ENCODE measurements at regions of chr13 and their contacts with region 1.

Region 1: GRCh38 chr13:46492946-46493345 is 60.0 kb upstream of the LRCH1 start:
- DNase-seq: peak in 1 of 10 donors; percentile 28
- H3K4me3 ChIP-seq: no peak overlapping the region
- H3K27ac ChIP-seq: no peak overlapping the region
- H3K27me3 ChIP-seq: peaks cover 0 to 9% (median 0%) of the 10 kb centered on the region in 45 donors
- CTCF ChIP-seq: peak; percentile 56 to 94 (median 76)

Region 2: GRCh38 chr13:46721054-46721453 is 228.1 kb after region 1 on chr13:
- intact Hi-C with region 1: loop called (anchors 2 to 5 kb)
- DNase-seq: peak in 5 of 10 donors; percentile 22 to 66 (median 44)
- H3K4me3 ChIP-seq: no peak overlapping the region
- H3K27ac ChIP-seq: no peak overlapping the region
- H3K27me3 ChIP-seq: peaks cover 0 to 4% (median 0%) of the 10 kb centered on the region in 45 donors
- CTCF ChIP-seq: peak; percentile 45 to 93 (median 75)

Region 3: GRCh38 chr13:47747901-47748300 is 1255.0 kb after region 1 on chr13:
- intact Hi-C with region 1: no loop called
- DNase-seq: no peak
- H3K4me3 ChIP-seq: no peak overlapping the region
- H3K27ac ChIP-seq: no peak overlapping the region
- H3K27me3 ChIP-seq: peaks cover 0 to 4% (median 0%) of the 10 kb centered on the region in 45 donors
- CTCF ChIP-seq: no peak